Tibial artery (tissue), 4 donors: ENCODE measurements at regions of chr13 and their contacts with region 1.

Region 1: GRCh38 chr13:94620286-94620896 is 18.7 kb downstream of the GPR180 start:
- DNase-seq: no peak
- H3K4me3 ChIP-seq: no peak overlapping the region
- H3K27ac ChIP-seq: no peak overlapping the region
- H3K4me1 ChIP-seq: no peaks in the 10 kb centered on the region
- H3K27me3 ChIP-seq: no peaks in the 10 kb centered on the region
- CTCF ChIP-seq: no peak

Region 2: GRCh38 chr13:92941167-92941566 is 1679.2 kb before region 1 on chr13:
- intact Hi-C with region 1: loop called (anchors 5 kb)
- DNase-seq: no peak
- H3K4me3 ChIP-seq: no peak overlapping the region
- H3K27ac ChIP-seq: no peak overlapping the region
- H3K4me1 ChIP-seq: peaks cover 0 to 19% (median 3%) of the 10 kb centered on the region in 4 donors
- H3K27me3 ChIP-seq: no peaks in the 10 kb centered on the region
- CTCF ChIP-seq: no peak

Region 3: DNA sequence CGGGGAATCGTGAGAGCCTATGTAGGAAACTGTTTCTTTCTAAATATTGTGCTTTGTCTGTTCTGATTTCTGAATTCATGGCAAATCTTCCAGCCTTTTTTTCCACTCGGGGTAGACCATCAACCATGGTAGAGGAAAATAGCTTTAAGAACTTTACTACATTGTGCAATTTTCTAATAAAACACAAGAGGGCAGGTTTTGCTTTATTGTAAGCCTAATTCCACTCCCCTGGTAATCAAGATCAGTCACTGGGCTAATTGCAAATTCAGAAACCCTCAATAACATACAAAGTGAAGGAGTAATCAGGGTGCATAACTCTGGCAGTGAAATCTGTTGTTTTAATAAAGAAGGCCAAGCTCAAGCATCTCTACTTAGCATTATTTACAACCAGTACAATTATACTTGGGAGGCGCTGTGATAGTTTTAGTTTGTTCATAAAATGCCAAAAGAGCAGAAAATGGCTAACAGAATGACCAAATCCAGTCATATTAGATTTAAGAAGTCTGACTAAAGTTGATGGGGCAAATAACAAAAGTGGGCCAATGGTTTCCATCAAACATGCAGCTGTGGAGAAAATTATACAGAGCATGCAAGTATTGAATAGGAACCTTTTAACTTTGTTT is 184.7 kb before region 1 on chr13:
- intact Hi-C with region 1: loop called (anchors 5 kb)
- DNase-seq: no peak
- H3K4me3 ChIP-seq: no peak overlapping the region
- H3K27ac ChIP-seq: no peak overlapping the region
- H3K4me1 ChIP-seq: no peaks in the 10 kb centered on the region
- H3K27me3 ChIP-seq: no peaks in the 10 kb centered on the region
- CTCF ChIP-seq: peak; percentile 50 to 60

Region 4: GRCh38 chr13:94558716-94559115 is 61.7 kb before region 1 on chr13:
- intact Hi-C with region 1: no loop called
- DNase-seq: no peak
- H3K4me3 ChIP-seq: no peak overlapping the region
- H3K27ac ChIP-seq: no peak overlapping the region
- H3K4me1 ChIP-seq: no peaks in the 10 kb centered on the region
- H3K27me3 ChIP-seq: no peaks in the 10 kb centered on the region
- CTCF ChIP-seq: no peak

Region 5: DNA sequence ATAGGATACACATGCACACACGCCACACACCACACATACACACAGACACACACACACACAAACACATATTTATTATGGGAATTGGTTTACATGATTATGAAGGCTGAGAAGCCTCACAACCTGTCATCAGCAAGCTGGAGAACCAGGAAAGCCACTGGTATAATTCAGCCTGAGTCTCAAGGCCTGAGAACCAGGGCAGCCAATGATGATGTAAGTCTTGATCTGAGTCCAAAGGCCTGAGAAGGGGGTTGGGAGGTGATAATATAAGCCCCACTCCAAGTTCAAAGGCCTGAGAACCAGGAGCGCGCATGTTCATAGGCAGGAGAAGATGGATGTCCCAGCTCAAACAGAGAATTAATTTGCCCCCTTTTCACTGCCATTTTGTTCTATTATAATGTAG is 110.6 kb after region 1 on chr13:
- intact Hi-C with region 1: no loop called
- DNase-seq: no peak
- H3K4me3 ChIP-seq: no peak overlapping the region
- H3K27ac ChIP-seq: no peak overlapping the region
- H3K4me1 ChIP-seq: no peaks in the 10 kb centered on the region
- H3K27me3 ChIP-seq: no peaks in the 10 kb centered on the region
- CTCF ChIP-seq: no peak

Region 6: GRCh38 chr13:94896719-94897317 is 276.4 kb after region 1 on chr13:
- intact Hi-C with region 1: no loop called
- DNase-seq: no peak
- H3K4me3 ChIP-seq: no peak overlapping the region
- H3K27ac ChIP-seq: no peak overlapping the region
- H3K4me1 ChIP-seq: no peaks in the 10 kb centered on the region
- H3K27me3 ChIP-seq: no peaks in the 10 kb centered on the region
- CTCF ChIP-seq: no peak